ENCODE measurements at regions of chr5 and their contacts with region 1.

Region 1: DNA sequence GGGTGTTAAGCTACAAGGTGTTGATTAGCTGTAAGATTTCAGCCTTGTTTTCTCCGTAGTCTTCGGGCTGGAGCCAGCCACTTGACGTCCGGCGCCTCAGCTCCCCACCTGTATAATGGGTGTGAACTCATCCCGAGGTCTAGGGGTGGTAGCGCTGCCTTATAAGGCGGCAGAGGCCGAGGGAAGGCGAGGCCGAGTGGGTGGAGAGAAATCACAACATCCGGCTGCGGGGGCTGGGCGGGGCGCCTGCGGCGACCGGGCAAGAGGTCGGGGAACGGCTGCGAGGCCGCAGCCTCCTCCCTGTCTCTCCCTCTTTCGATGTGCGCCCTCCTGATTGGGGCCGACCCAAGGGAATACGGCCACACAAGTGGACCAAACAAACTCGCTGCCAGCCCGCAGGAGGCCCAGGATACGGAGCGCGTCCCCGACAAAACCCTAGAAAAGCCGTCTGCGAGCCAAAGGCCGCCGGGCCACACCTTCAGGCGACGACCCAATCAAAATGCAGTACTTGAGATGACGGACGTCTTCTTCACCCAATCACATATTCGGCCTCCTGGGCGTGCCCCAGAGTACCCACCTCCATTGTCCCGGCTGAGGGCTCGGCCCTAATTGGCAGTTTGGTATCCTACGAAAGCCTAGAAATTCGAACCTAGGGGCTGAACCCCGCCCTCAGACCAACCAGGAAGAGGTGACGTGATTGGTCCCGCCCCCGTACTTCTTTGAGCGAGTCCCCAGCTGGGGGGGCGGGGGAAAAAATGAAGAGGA is 493 bp upstream of the GRK6 start:
- DNase-seq: peak; percentile 100
- H3K4me3 ChIP-seq: peak overlapping the region; percentile 38 to 61 (median 52)
- H3K27ac ChIP-seq: peak overlapping the region; percentile 95 to 98 (median 96)
- H3K4me1 ChIP-seq: peaks cover 26 to 41% (median 29%) of the 10 kb centered on the region in 4 donors
- H3K27me3 ChIP-seq: no peaks in the 10 kb centered on the region
- CTCF ChIP-seq: no peak
- EP300 ChIP-seq: no peak
- POLR2A ChIP-seq: peak; percentile 93

Region 2: GRCh38 chr5:177403792-177404640 is 22.0 kb before region 1 on chr5:
- in situ Hi-C with region 1: no loop called
- intact Hi-C with region 1: no loop called
- DNase-seq: peak; percentile 92
- H3K4me3 ChIP-seq: peak overlapping the region; percentile 2 to 81 (median 47)
- H3K27ac ChIP-seq: peak overlapping the region; percentile 61 to 86 (median 74)
- H3K4me1 ChIP-seq: peaks cover 20 to 50% (median 42%) of the 10 kb centered on the region in 4 donors
- H3K27me3 ChIP-seq: peaks cover 48% of the 10 kb centered on the region
- CTCF ChIP-seq: peak; percentile 65 to 87 (median 68)
- EP300 ChIP-seq: no peak
- POLR2A ChIP-seq: no peak

Region 3: GRCh38 chr5:177497292-177498033 is 71.5 kb after region 1 on chr5 and contains the start of gene PDLIM7:
- in situ Hi-C with region 1: no loop called
- intact Hi-C with region 1: loop called (anchors 2 kb)
- DNase-seq: peak; percentile 97
- H3K4me3 ChIP-seq: peak within 1 kb of the TSS; percentile 54 to 80 (median 65)
- H3K27ac ChIP-seq: peak within 1 kb of the TSS; percentile 91 to 96 (median 94)
- H3K4me1 ChIP-seq: peaks cover 20 to 64% (median 45%) of the 10 kb centered on the region in 4 donors
- H3K27me3 ChIP-seq: peaks cover 10% of the 10 kb centered on the region
- CTCF ChIP-seq: peak in 2 of 5 experiments; percentile 7 to 10
- EP300 ChIP-seq: no peak
- POLR2A ChIP-seq: peak; percentile 90
- total RNA-seq, gene PDLIM7: 52.6 to 256 (median 78.6) TPM

Measured in transverse colon (tissue), 4 donors.